Testis (tissue), 5 donors: ENCODE measurements at regions of chr2 and their contacts with region 1.

Region 1: GRCh38 chr2:69811018-69811417 is 18.4 kb upstream of the GMCL1 start:
- DNase-seq: no peak
- H3K4me3 ChIP-seq: no peak overlapping the region
- H3K27ac ChIP-seq: no peak overlapping the region
- H3K4me1 ChIP-seq: no peaks in the 10 kb centered on the region
- H3K27me3 ChIP-seq: no peaks in the 10 kb centered on the region
- CTCF ChIP-seq: no peak
- POLR2A ChIP-seq: no peak

Region 2: GRCh38 chr2:69724540-69725159 is 86.4 kb before region 1 on chr2:
- intact Hi-C with region 1: loop called (anchors 5 kb)
- DNase-seq: peak; percentile 96
- H3K4me3 ChIP-seq: peak overlapping the region in 1 of 2 donors; percentile 6
- H3K27ac ChIP-seq: no peak overlapping the region
- H3K4me1 ChIP-seq: peaks cover 4% of the 10 kb centered on the region
- H3K27me3 ChIP-seq: no peaks in the 10 kb centered on the region
- CTCF ChIP-seq: peak; percentile 92 to 95 (median 94)
- POLR2A ChIP-seq: no peak